ENCODE measurements at regions of chr11 and their contacts with region 1.

Region 1: GRCh38 chr11:119095066-119095880 is 6.4 kb downstream of the DPAGT1 start:
- DNase-seq: peak; percentile 99
- H3K4me3 Mint-ChIP-seq: peak overlapping the region; percentile 89
- H3K27ac Mint-ChIP-seq: peak overlapping the region; percentile 89
- H3K4me1 Mint-ChIP-seq: peaks cover 50% of the 10 kb centered on the region
- H3K27me3 Mint-ChIP-seq: peaks cover 2% of the 10 kb centered on the region

Region 2: GRCh38 chr11:119018074-119018938 is 77.0 kb before region 1 on chr11 and contains the starts of genes RPS25 and TRAPPC4:
- intact Hi-C with region 1: loop called (anchors 2 kb)
- DNase-seq: peak; percentile 93
- H3K4me3 Mint-ChIP-seq: peak within 1 kb of the TSS; percentile 99
- H3K27ac Mint-ChIP-seq: peak within 1 kb of the TSS; percentile 100
- H3K4me1 Mint-ChIP-seq: peaks cover 25% of the 10 kb centered on the region
- H3K27me3 Mint-ChIP-seq: no peaks in the 10 kb centered on the region
- total RNA-seq, gene RPS25: 1,728 and 1,773 TPM in 2 replicates
- total RNA-seq, gene TRAPPC4: 121 and 128 TPM in 2 replicates

Region 3: DNA sequence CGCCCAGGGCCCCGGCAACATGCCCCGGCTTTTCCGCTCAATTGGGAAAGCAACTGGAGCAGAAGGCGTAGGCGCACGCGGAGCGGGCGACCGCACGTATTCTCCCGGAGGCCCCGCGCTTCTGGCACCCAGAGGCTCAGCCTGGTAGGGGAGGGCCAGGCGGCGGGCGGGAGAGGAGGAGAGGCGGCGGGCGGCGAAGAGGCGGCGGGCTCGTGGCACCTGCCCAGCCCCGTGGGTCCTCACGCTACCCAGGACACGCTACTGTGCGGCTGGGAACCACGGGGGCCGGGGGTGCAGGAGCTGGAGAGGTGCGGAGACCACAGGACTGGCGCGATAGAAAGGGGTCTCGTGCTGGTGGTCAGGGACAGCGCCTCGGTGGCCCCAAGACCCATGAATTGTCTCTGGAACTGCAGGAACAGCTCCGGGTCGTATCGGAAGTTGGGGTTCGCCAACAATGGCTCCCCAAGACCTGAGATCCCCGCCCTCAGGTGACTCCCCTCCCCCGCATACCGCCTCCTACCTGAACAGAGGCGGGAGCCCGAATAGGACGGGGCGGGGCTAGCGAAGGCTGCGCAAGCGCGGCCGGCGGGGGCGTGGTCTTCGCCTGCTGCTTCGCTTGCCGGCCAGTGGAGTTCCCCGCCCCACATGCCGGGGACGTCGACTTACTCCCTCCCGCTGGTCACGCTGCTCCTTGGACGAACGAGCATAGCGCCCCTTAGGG is 64.8 kb before region 1 on chr11 and contains the start of gene SLC37A4:
- intact Hi-C with region 1: loop called (anchors 2 kb)
- DNase-seq: peak; percentile 98
- H3K4me3 Mint-ChIP-seq: peak within 1 kb of the TSS; percentile 75
- H3K27ac Mint-ChIP-seq: peak within 1 kb of the TSS; percentile 65
- H3K4me1 Mint-ChIP-seq: peaks cover 15% of the 10 kb centered on the region
- H3K27me3 Mint-ChIP-seq: no peaks in the 10 kb centered on the region
- total RNA-seq, gene SLC37A4: 31.7 and 34.4 TPM in 2 replicates

Region 4: DNA sequence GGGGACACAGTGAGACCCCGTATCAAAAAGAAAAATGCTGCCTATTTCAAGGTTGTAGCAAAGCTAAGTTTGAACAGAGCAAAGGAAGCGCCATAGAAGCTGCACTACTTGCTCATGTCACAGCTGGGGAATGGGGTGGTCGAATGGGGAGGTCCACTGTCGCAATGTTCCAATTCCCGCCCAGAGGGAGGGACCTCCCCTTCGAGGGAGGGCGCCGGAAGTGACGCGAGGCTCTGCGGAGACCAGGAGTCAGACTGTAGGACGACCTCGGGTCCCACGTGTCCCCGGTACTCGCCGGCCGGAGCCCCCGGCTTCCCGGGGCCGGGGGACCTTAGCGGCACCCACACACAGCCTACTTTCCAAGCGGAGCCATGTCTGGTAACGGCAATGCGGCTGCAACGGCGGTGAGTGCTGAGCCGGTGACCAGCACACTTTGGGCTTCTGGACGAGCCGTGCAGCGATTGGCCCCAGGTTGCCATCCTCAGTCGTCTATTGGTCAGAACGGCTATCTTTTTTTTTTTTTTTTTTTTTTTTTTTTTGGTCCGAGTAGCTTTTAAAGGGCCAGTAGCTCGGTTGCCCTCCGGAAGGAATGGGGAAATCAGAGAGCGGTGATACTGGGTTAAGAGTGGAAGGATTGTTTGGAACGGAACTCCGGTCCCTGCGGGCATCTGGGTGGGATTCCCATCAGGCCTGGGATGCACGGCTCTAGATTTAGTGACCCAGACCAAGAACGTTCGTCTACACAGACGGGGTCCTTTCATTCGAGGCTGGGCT is 10.4 kb before region 1 on chr11 and contains the start of gene HMBS:
- intact Hi-C with region 1: loop called (anchors 1 kb)
- DNase-seq: peak; percentile 91
- H3K4me3 Mint-ChIP-seq: peak within 1 kb of the TSS; percentile 96
- H3K27ac Mint-ChIP-seq: peak within 1 kb of the TSS; percentile 93
- H3K4me1 Mint-ChIP-seq: peaks cover 29% of the 10 kb centered on the region
- H3K27me3 Mint-ChIP-seq: no peaks in the 10 kb centered on the region
- total RNA-seq, gene HMBS: 57.4 and 59.0 TPM in 2 replicates

Region 5: GRCh38 chr11:119121008-119121810 is 25.9 kb after region 1 on chr11 and contains the start of gene HINFP:
- intact Hi-C with region 1: loop called (anchors 2 kb)
- DNase-seq: peak; percentile 99
- H3K4me3 Mint-ChIP-seq: peak within 1 kb of the TSS; percentile 92
- H3K27ac Mint-ChIP-seq: peak within 1 kb of the TSS; percentile 87
- H3K4me1 Mint-ChIP-seq: peaks cover 22% of the 10 kb centered on the region
- H3K27me3 Mint-ChIP-seq: no peaks in the 10 kb centered on the region
- total RNA-seq, gene HINFP: 29.8 and 35.5 TPM in 2 replicates